ENCODE measurements at regions of chr6 and their contacts with region 1.

Region 1: GRCh38 chr6:41705996-41706835 is 29.2 kb downstream of the TFEB start:
- DNase-seq: peak; percentile 90
- ATAC-seq: peak; percentile 88

Region 2: GRCh38 chr6:40258531-40258930 is 1447.7 kb before region 1 on chr6:
- intact Hi-C with region 1: no loop called
- DNase-seq: no peak
- ATAC-seq: no peak

Region 3: GRCh38 chr6:41735427-41736356 is 29.5 kb after region 1 on chr6 and contains the start of gene TFEB:
- intact Hi-C with region 1: loop called (anchors 2 kb)
- DNase-seq: peak; percentile 97
- ATAC-seq: peak; percentile 68
- total RNA-seq, gene TFEB: 40.7 TPM